Heart right ventricle (tissue), 16 donors: ENCODE measurements at regions of chr16 and their contacts with region 1.

Region 1: GRCh38 chr16:10202650-10203049 is 20.4 kb upstream of the GRIN2A start:
- DNase-seq: no peak
- ATAC-seq: no peak
- H3K4me3 ChIP-seq: no peak overlapping the region
- H3K27ac ChIP-seq: no peak overlapping the region
- H3K4me1 ChIP-seq: no peaks in the 10 kb centered on the region
- H3K27me3 ChIP-seq: peaks cover 0 to 12% (median 0%) of the 10 kb centered on the region in 7 donors
- CTCF ChIP-seq: no peak

Region 2: DNA sequence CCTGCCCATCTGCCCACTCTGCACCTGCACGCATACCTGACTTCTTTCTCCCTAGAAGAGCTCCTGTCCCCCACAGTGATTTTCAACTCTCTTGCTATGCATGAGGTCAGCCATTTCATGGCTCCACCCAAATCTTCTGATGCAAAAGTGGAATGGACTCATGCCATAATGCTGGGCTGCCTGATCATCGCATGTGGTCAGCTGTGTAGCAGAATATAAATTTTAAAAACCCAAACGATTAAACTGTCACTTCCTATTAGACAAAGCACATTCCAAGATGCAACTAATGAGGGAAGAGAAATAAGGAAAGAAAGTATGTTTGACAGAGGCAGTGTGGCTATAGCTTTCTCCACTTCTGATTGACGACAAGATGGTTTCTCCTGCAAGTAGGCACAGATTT is 46.6 kb before region 1 on chr16:
- intact Hi-C with region 1: loop called in 1 of 10 experiments (anchors 1 kb)
- DNase-seq: no peak
- ATAC-seq: no peak
- H3K4me3 ChIP-seq: no peak overlapping the region
- H3K27ac ChIP-seq: no peak overlapping the region
- H3K4me1 ChIP-seq: no peaks in the 10 kb centered on the region
- H3K27me3 ChIP-seq: peaks cover 0 to 30% (median 8%) of the 10 kb centered on the region in 7 donors
- CTCF ChIP-seq: no peak

Region 3: DNA sequence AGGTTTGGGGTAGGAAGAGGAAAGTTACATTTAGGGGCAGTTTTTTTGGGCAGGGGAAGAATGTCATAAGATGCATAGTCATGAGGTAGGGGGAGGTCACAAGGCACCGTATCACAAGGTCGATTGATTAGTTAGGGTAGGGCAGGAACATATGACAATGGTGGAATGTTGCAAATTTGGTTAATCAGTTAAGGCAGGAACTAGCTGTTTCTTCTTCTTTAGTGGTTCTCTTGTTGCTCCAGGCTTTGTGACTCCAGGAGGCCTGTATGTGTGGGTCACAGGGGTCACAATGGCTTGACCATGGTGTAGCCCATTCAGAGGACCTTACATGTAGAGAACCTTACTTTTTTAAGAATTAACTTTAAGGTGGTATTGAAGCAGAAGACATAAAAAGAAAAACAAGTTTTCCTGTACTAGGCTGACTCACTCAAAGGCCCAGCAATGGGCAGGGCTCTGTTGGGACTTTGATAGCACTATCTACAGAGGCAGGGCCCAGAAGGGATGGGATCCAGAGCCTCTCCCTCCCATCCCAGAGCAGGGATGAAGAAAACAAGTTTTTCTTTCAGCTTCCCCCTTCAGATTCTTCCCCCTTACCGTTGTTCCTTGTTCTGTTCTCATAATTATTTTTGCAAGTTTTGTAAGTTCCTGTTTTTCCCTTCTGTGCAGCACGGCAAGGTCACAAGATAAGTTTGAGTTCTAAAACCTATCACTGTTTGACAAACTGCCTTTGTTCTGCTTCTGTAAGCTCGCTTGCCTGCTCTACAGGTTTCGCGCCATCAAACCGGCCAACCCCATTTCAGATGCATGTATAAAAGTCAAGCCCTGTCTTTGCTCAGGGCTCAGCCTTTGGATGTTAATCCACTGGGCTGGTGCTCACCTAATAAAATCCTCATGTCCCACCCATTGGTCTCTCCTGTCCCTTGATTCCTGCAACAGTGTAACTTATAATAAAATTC is 137.4 kb after region 1 on chr16:
- intact Hi-C with region 1: no loop called
- DNase-seq: no peak
- ATAC-seq: no peak
- H3K4me3 ChIP-seq: no peak overlapping the region
- H3K27ac ChIP-seq: no peak overlapping the region
- H3K4me1 ChIP-seq: peaks cover 0 to 1% (median 0%) of the 10 kb centered on the region in 9 donors
- H3K27me3 ChIP-seq: no peaks in the 10 kb centered on the region
- CTCF ChIP-seq: no peak

Region 4: DNA sequence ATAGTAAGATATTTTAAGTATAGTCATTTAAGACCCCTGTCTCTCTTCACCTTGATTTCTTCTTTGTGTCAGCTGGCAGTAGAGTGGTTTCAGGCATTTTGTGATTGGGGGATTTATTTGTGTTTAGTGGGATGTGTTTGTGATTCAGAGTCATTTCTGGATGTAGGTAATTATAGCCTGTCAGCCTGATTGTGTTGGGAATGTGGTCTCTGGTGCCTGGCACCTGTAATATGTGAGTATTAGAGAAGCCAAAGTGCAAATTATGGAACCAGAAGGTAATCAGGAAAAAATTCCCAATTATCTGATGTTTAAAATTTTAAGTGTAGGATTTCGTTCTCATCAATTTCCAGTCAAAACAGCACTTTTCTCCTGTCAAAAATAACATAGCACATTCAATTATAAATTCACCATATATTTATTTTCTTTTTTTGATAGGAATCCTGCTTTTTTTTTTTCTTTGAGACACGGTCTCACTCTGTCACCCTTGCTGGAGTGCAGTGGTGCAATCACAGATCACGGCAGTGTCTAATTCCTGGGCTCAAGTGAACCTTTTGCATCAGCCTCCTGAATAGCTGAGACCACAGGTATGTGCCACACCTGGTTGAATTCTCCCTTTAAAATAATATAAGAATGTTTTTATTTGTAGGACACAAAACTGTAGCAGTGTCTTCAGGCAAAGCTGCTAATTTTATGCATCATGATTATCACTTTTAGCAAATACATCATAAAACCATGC is 226.0 kb after region 1 on chr16:
- intact Hi-C with region 1: no loop called
- DNase-seq: no peak
- ATAC-seq: no peak
- H3K4me3 ChIP-seq: no peak overlapping the region
- H3K27ac ChIP-seq: no peak overlapping the region
- H3K4me1 ChIP-seq: peaks cover 0 to 11% (median 0%) of the 10 kb centered on the region in 9 donors
- H3K27me3 ChIP-seq: no peaks in the 10 kb centered on the region
- CTCF ChIP-seq: no peak